MCF 10A (cell line): ENCODE measurements at regions of chr9 and their contacts with region 1.

Region 1: GRCh38 chr9:112333639-112334431 is 416 bp upstream of the PTBP3 start:
- DNase-seq: peak; percentile 94
- H3K4me3 Mint-ChIP-seq: peak overlapping the region; percentile 94
- H3K27ac Mint-ChIP-seq: peak overlapping the region; percentile 94
- H3K4me1 Mint-ChIP-seq: peaks cover 13% of the 10 kb centered on the region
- H3K27me3 Mint-ChIP-seq: no peaks in the 10 kb centered on the region
- CTCF ChIP-seq: peak; percentile 35

Region 2: GRCh38 chr9:112097712-112098688 is 235.8 kb before region 1 on chr9:
- CTCF ChIA-PET with region 1: interaction called, 4 read pairs
- POLR2A ChIA-PET with region 1: interaction called, 4 read pairs
- intact Hi-C with region 1: loop called (anchors 1 kb)
- DNase-seq: peak; percentile 79
- H3K4me3 Mint-ChIP-seq: no peak overlapping the region
- H3K27ac Mint-ChIP-seq: no peak overlapping the region
- H3K4me1 Mint-ChIP-seq: no peaks in the 10 kb centered on the region
- H3K27me3 Mint-ChIP-seq: no peaks in the 10 kb centered on the region
- CTCF ChIP-seq: peak; percentile 75

Region 3: DNA sequence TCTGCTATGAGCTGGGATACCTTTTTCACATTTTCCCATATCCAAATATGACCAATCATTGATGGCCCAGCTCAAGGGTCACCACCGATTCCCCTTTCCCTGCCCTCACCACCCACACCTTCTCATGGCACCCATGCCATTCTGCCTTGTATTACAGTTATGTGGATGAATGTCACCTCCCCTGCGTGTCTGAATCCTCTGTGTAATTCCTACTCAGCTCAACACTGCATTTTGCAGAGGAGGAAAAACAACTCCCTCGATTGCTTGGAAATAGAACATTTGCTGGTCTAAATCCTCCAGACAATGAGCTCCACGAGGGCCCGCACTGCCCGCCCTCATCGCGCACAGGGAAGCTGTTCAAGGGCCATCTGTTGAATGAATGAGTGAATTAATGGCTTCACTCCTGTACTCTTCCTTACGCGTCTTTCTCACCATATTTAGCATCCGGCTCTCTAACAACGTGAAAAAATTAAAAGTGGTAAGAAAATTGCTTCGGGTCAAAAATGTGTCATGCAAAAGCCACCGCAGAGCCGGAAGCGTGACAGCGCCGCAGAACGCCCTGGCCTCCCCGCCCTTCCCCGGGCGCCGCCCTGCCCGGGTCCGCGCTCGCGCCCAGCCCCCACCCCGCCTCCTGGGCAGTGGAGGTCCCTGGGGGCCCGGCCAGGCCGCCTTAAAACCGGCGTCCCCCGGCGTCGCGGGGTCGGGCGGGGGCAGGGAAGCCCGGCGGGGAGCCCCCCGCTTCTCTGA is 159.4 kb before region 1 on chr9:
- CTCF ChIA-PET with region 1: no interaction called
- POLR2A ChIA-PET with region 1: interaction called, 7 read pairs
- intact Hi-C with region 1: loop called (anchors 2 kb)
- DNase-seq: peak; percentile 52
- H3K4me3 Mint-ChIP-seq: peak overlapping the region; percentile 71
- H3K27ac Mint-ChIP-seq: no peak overlapping the region
- H3K4me1 Mint-ChIP-seq: no peaks in the 10 kb centered on the region
- H3K27me3 Mint-ChIP-seq: no peaks in the 10 kb centered on the region
- CTCF ChIP-seq: no peak

Region 4: DNA sequence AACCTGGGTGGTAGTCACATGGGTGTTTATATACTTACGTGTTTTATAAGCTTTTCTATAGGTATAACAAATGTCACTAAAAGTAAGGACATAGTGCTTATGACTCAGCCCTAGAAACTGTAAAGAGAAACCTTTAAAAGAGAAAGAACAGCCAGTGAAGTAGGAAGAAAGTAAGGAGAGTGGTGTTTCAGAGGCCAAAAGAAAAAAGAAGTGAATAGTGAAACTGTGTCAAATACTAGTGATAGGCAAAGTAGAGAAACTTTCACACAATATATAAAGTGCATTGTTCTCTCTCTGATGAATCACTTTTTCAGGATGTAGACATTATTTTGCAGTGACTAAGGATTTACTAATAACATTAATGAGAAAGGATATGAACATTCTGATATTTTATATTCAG is 84.6 kb before region 1 on chr9:
- CTCF ChIA-PET with region 1: interaction called, 3 read pairs
- POLR2A ChIA-PET with region 1: interaction called, 26 read pairs
- intact Hi-C with region 1: no loop called
- DNase-seq: peak; percentile 17
- H3K4me3 Mint-ChIP-seq: peak overlapping the region; percentile 38
- H3K27ac Mint-ChIP-seq: peak overlapping the region; percentile 84
- H3K4me1 Mint-ChIP-seq: peaks cover 18% of the 10 kb centered on the region
- H3K27me3 Mint-ChIP-seq: no peaks in the 10 kb centered on the region
- CTCF ChIP-seq: no peak

Region 5: DNA sequence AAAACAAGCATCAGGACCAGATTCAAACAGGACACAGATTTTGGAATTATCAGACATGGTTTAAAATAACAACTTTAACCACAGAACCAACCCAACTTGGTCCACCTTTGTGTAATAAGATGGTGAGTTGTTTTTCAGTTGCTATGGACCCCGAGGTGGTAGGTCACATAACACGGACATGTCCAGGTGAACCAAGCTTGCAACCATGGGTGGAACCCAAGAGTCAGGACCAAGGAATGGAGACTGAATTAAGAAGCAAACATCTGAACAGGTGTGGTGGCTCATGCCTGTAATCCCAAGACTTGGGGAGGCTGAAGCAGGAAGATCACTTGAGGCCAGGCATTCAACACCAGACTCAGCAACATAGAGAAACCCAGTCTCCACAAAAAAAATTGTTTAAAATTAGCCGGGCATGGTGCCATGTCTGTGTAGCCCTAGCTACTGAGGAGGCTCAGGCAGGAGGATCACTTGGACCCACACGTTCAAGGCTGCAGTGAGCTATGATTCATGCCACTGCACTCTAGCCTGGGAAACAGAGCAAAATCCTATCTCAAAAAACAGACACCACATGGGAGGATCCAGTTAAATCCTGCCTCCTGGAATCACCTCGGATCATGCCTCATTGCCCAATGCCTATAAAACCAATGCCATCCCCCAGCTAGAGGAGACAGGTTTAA is 11.0 kb before region 1 on chr9:
- CTCF ChIA-PET with region 1: interaction called, 4 read pairs
- POLR2A ChIA-PET with region 1: interaction called, 50 read pairs
- intact Hi-C with region 1: no loop called
- DNase-seq: peak; percentile 53
- H3K4me3 Mint-ChIP-seq: peak overlapping the region; percentile 43
- H3K27ac Mint-ChIP-seq: peak overlapping the region; percentile 67
- H3K4me1 Mint-ChIP-seq: peaks cover 29% of the 10 kb centered on the region
- H3K27me3 Mint-ChIP-seq: no peaks in the 10 kb centered on the region
- CTCF ChIP-seq: no peak